Caco-2 (cell line): ENCODE measurements at regions of chr18 and their contacts with region 1.

Region 1: GRCh38 chr18:28108814-28109213 is 68.1 kb downstream of the CDH2 start:
- DNase-seq: no peak
- H3K4me3 ChIP-seq: no peak overlapping the region
- H3K4me3 Mint-ChIP-seq: no peak overlapping the region
- H3K27ac Mint-ChIP-seq: no peak overlapping the region
- H3K4me1 ChIP-seq: peaks cover 16% of the 10 kb centered on the region; the same call in 1 of the 2 replicates
- H3K4me1 Mint-ChIP-seq: peaks cover 15% of the 10 kb centered on the region
- H3K27me3 ChIP-seq: no peaks in the 10 kb centered on the region
- H3K27me3 Mint-ChIP-seq: no peaks in the 10 kb centered on the region
- CTCF ChIP-seq: no peak

Region 2: GRCh38 chr18:27860701-27861107 is 248.1 kb before region 1 on chr18:
- CTCF ChIA-PET with region 1: no interaction called
- POLR2A ChIA-PET with region 1: no interaction called
- intact Hi-C with region 1: no loop called
- DNase-seq: peak in 1 of 2 experiments; percentile 2
- H3K4me3 ChIP-seq: no peak overlapping the region
- H3K4me3 Mint-ChIP-seq: no peak overlapping the region
- H3K27ac Mint-ChIP-seq: no peak overlapping the region
- H3K4me1 ChIP-seq: no peaks in the 10 kb centered on the region
- H3K4me1 Mint-ChIP-seq: no peaks in the 10 kb centered on the region
- H3K27me3 ChIP-seq: no peaks in the 10 kb centered on the region
- H3K27me3 Mint-ChIP-seq: no peaks in the 10 kb centered on the region
- CTCF ChIP-seq: no peak

Region 3: DNA sequence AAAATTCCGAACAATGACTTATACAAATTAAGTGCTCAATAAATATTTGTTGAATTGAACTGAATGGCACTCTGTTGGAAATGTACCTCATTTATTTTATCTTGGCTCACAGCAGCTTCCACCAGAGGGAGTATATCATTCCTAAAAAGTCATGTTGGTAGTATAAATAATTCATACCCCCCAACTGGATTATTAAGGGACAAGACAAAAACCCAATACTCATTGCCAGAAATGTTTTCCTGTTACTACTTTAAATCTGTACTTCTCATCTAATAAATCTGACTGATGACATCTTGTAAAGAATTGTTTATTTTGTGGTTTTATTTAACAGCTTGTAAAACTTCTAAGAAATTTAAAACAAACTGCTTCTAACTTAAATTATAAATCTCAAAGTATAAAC is 95.7 kb before region 1 on chr18:
- CTCF ChIA-PET with region 1: no interaction called
- POLR2A ChIA-PET with region 1: no interaction called
- intact Hi-C with region 1: loop called (anchors 5 kb)
- DNase-seq: no peak
- H3K4me3 ChIP-seq: no peak overlapping the region
- H3K4me3 Mint-ChIP-seq: no peak overlapping the region
- H3K27ac Mint-ChIP-seq: no peak overlapping the region
- H3K4me1 ChIP-seq: no peaks in the 10 kb centered on the region
- H3K4me1 Mint-ChIP-seq: no peaks in the 10 kb centered on the region
- H3K27me3 ChIP-seq: no peaks in the 10 kb centered on the region
- H3K27me3 Mint-ChIP-seq: no peaks in the 10 kb centered on the region
- CTCF ChIP-seq: no peak

Region 4: DNA sequence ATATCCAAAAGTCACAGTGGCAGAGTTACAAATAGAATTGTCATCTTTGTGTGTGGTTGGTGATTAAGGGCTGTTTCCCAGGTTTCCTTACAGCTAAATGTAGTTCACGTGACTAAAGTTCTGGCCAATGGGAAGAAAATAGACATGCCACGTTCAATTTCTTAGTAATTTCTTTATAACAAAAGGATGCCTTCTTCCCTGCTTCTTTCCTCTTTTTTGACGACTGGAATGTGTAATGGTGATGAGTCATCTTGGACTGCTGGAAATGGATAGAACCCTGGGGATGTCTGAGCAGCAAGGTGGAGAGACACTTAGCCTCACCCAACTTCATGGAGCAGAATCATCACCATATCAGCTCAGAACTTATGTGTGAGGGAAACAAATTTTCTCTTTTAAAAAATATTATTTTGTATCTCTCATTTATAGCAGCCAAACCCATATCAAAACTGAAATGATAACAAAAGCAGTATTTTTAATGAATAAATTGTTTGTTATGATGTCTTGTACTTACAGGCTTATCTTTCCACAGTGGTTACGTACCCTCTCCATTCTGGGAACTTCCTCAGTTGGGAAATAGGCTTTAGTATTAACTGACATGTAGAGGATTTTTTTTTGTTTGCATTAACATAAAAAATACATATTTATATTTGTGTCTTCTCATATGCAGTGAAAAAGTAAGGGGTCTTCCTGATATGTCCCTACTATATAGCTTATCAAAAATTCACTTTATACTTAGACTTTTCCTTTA is 159.2 kb after region 1 on chr18:
- CTCF ChIA-PET with region 1: no interaction called
- POLR2A ChIA-PET with region 1: no interaction called
- intact Hi-C with region 1: no loop called
- DNase-seq: no peak
- H3K4me3 ChIP-seq: no peak overlapping the region
- H3K4me3 Mint-ChIP-seq: no peak overlapping the region
- H3K27ac Mint-ChIP-seq: no peak overlapping the region
- H3K4me1 ChIP-seq: no peaks in the 10 kb centered on the region
- H3K4me1 Mint-ChIP-seq: no peaks in the 10 kb centered on the region
- H3K27me3 ChIP-seq: no peaks in the 10 kb centered on the region
- H3K27me3 Mint-ChIP-seq: peaks cover 3% of the 10 kb centered on the region
- CTCF ChIP-seq: no peak